Calu3 (cell line): ENCODE measurements at regions of chr2 and their contacts with region 1.

Region 1: GRCh38 chr2:85504778-85505323 is 34.1 kb upstream of the MAT2A start:
- DNase-seq: peak; percentile 52
- H3K4me3 Mint-ChIP-seq: no peak overlapping the region
- H3K27ac Mint-ChIP-seq: peak overlapping the region; percentile 57
- H3K4me1 Mint-ChIP-seq: peaks cover 49% of the 10 kb centered on the region
- H3K27me3 Mint-ChIP-seq: no peaks in the 10 kb centered on the region
- CTCF ChIP-seq: no peak

Region 2: GRCh38 chr2:85420536-85421259 is 84.2 kb before region 1 on chr2:
- CTCF ChIA-PET with region 1: interaction called, 4 read pairs
- intact Hi-C with region 1: loop called (anchors 2 kb)
- DNase-seq: peak; percentile 94
- H3K4me3 Mint-ChIP-seq: peak overlapping the region; percentile 56
- H3K27ac Mint-ChIP-seq: peak overlapping the region; percentile 84
- H3K4me1 Mint-ChIP-seq: peaks cover 37% of the 10 kb centered on the region
- H3K27me3 Mint-ChIP-seq: no peaks in the 10 kb centered on the region
- CTCF ChIP-seq: peak; percentile 97